HEK293T (cell line): ENCODE measurements at regions of chr12 and their contacts with region 1.

Region 1: DNA sequence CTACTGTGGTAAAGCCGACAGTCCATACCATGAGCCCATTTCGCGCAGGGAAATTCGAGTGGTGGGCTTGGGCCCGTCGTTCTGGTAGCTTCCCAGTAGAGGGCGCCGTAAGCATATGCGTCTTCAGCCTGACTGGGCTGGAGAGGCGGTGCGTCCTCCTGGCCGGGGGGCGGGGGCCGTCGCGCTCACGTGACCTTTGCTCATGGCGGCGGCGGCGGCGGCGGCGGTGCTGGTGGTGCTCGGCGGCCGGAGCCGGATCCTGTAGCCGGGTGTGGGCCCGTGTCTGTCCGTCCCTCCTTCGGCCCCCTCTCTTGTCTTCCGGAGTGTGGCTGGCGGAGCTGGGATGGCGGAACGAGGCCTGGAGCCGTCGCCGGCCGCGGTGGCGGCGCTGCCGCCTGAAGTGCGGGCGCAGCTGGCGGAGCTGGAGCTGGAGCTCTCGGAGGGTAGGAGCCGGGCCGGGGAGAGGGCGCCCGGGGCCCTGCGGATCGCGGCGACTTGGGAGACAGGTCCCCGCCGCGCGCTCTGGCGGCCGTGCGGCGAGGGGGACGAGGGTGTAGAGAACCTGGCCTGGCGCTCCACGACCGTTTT is at the start of gene DIP2B:
- DNase-seq: peak; percentile 91

Region 2: GRCh38 chr12:50400598-50401364 is 104.1 kb before region 1 on chr12 and contains the start of gene LARP4:
- CTCF ChIA-PET with region 1: no interaction called
- POLR2A ChIA-PET with region 1: no interaction called
- DNase-seq: peak; percentile 94

Region 3: GRCh38 chr12:50425589-50426258 is 79.2 kb before region 1 on chr12:
- CTCF ChIA-PET with region 1: no interaction called
- POLR2A ChIA-PET with region 1: no interaction called
- DNase-seq: no peak

Region 4: DNA sequence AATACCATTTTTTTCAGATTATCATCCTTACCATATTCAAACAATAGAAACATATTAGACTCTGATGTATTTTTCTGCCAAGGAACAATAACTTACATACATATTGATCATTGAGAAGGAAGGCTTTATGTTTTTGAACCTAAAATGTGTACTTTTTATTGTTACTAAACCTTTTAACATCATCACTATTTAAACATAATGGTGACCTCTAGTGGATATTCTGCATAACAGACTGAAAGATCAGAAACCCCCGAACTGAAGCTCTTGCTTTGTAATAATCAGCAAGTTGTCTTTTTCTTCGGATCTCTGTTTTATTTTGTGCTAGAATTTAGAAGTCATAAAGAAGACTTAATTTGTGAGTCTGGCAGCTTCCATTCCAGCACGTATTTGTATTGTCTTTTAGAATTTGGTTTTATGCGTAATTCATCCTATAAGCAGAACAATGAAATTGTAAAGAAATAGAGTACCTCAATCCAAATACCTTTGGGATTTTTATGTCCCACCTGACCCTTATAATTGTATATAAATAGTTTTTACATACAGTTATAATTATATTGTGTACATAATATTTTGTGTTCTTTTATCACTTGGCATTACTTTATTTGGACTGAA is 133.1 kb after region 1 on chr12:
- CTCF ChIA-PET with region 1: interaction called, 10 read pairs
- POLR2A ChIA-PET with region 1: interaction called, 3 read pairs
- DNase-seq: peak; percentile 35